ENCODE measurements at regions of chr6 and their contacts with region 1.

Region 1: GRCh38 chr6:29847871-29848630 is 20.4 kb downstream of the HLA-G start:
- DNase-seq: peak; percentile 83 to 93
- ATAC-seq: peak; percentile 82 to 95 (median 89)
- H3K4me3 ChIP-seq: no peak overlapping the region
- H3K4me3 Mint-ChIP-seq: no peak overlapping the region
- H3K27ac ChIP-seq: no peak overlapping the region
- H3K27ac Mint-ChIP-seq: no peak overlapping the region
- H3K4me1 ChIP-seq: peaks cover 10% of the 10 kb centered on the region
- H3K4me1 Mint-ChIP-seq: peaks cover 12 to 16% of the 10 kb centered on the region in 2 donors
- H3K27me3 ChIP-seq: peaks cover 29% of the 10 kb centered on the region
- H3K27me3 Mint-ChIP-seq: peaks cover 53 to 75% of the 10 kb centered on the region in 2 donors
- CTCF ChIP-seq: peak; percentile 97

Region 2: GRCh38 chr6:29752451-29753308 is 95.4 kb before region 1 on chr6:
- intact Hi-C with region 1: no loop called
- DNase-seq: peak; percentile 85 to 94
- ATAC-seq: peak; percentile 69 to 87 (median 75)
- H3K4me3 ChIP-seq: peak overlapping the region; percentile 89
- H3K4me3 Mint-ChIP-seq: peak overlapping the region; percentile 97
- H3K27ac ChIP-seq: peak overlapping the region; percentile 92
- H3K27ac Mint-ChIP-seq: peak overlapping the region; percentile 76 to 96
- H3K4me1 ChIP-seq: peaks cover 28% of the 10 kb centered on the region
- H3K4me1 Mint-ChIP-seq: peaks cover 43 to 65% of the 10 kb centered on the region in 2 donors
- H3K27me3 ChIP-seq: no peaks in the 10 kb centered on the region
- H3K27me3 Mint-ChIP-seq: no peaks in the 10 kb centered on the region
- CTCF ChIP-seq: peak; percentile 98

Region 3: GRCh38 chr6:29861521-29862255 is 13.6 kb after region 1 on chr6:
- intact Hi-C with region 1: no loop called
- DNase-seq: no peak
- ATAC-seq: no peak
- H3K4me3 ChIP-seq: no peak overlapping the region
- H3K4me3 Mint-ChIP-seq: no peak overlapping the region
- H3K27ac ChIP-seq: no peak overlapping the region
- H3K27ac Mint-ChIP-seq: no peak overlapping the region
- H3K4me1 ChIP-seq: no peaks in the 10 kb centered on the region
- H3K4me1 Mint-ChIP-seq: no peaks in the 10 kb centered on the region
- H3K27me3 ChIP-seq: peaks cover 8% of the 10 kb centered on the region
- H3K27me3 Mint-ChIP-seq: peaks cover 49 to 74% of the 10 kb centered on the region in 2 donors
- CTCF ChIP-seq: no peak

Region 4: DNA sequence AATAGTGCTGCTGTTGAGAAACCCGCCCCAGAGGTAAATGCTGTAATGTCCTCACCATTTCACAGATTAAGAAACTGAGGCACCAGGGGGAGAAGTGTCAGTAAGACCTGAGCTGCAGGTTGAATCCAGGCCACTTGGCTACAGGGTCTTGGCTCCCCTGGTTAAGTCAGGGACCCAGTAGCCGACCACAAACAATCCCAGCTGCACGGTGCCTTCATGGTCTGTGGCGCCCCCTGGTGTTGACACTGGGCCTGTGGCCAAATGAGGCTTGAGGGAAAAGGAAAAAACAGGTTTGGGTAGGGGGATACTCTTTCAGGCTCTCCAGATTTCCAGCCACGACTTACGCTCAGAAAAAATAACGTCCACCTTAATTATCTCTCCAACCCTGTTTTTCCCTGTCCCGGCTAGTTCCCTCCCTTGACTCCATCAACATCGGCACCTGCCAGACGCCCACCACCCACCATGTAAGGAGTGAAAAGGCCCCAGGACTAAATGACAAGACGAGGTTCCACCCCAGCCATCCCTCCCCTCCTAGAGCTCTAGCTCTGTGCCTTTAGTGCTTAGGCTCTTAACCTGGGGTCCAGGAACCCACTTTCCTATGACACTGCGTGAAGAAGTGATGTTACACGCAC is 165.4 kb after region 1 on chr6:
- intact Hi-C with region 1: loop called (anchors 1 kb)
- DNase-seq: peak in 1 of 2 donors; percentile 59
- ATAC-seq: peak; percentile 64 to 67 (median 66)
- H3K4me3 ChIP-seq: no peak overlapping the region
- H3K4me3 Mint-ChIP-seq: no peak overlapping the region
- H3K27ac ChIP-seq: no peak overlapping the region
- H3K27ac Mint-ChIP-seq: no peak overlapping the region
- H3K4me1 ChIP-seq: no peaks in the 10 kb centered on the region
- H3K4me1 Mint-ChIP-seq: peaks cover 0 to 6% of the 10 kb centered on the region in 2 donors
- H3K27me3 ChIP-seq: peaks cover 1% of the 10 kb centered on the region
- H3K27me3 Mint-ChIP-seq: no peaks in the 10 kb centered on the region
- CTCF ChIP-seq: peak; percentile 75

Region 5: DNA sequence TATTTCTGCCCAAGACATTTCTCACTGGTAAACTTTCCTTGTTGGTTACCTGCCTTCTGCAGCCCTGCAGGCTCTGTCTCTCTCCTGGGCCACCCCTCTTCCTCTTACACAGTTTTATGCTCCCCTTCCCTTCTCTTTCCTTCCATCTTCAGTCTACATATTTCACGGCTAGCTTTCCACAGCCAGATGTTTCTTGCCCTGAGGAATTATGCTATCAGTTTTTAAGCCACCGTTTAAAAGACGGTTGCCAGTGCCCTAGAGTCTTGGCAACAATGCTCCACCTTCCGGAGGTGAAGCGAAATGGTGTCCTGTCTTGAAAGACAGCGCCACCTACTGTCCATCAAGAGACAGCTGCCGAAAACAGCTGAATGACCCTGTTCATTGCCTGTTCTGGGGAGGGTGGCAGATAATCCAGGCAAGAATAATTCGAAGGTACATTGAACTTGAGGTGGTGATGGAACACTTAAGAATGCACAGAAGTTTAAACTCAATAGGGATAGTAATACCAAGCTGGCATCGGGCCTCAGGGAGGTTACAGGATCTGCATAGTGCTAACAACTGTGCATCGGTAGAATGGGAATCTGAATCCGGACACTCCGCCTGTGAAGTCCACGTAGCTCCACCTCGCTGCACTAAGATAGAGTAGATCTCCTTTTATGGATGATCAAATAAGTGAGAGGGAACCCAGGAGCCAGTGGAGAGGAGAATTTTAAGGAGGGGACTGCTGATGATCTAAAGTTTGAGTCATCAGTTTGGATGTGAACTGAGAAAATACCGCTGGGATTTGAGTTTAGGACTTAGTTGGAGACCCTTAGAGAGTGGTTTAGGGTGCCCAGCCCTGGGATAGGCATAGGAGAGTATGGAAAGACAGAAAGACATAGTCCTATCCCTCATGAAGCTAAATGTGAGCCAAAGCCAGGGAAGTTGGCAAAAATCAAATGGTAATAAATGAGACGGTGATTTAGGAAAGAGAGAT is 283.1 kb after region 1 on chr6:
- intact Hi-C with region 1: loop called (anchors 2 kb)
- DNase-seq: peak; percentile 36 to 94
- ATAC-seq: peak; percentile 95 to 99 (median 98)
- H3K4me3 ChIP-seq: no peak overlapping the region
- H3K4me3 Mint-ChIP-seq: no peak overlapping the region
- H3K27ac ChIP-seq: no peak overlapping the region
- H3K27ac Mint-ChIP-seq: no peak overlapping the region
- H3K4me1 ChIP-seq: peaks cover 4% of the 10 kb centered on the region
- H3K4me1 Mint-ChIP-seq: peaks cover 5 to 7% of the 10 kb centered on the region in 2 donors
- H3K27me3 ChIP-seq: peaks cover 26% of the 10 kb centered on the region
- H3K27me3 Mint-ChIP-seq: peaks cover 48 to 68% of the 10 kb centered on the region in 2 donors
- CTCF ChIP-seq: peak; percentile 100

Region 6: GRCh38 chr6:30283761-30284160 is 435.7 kb after region 1 on chr6:
- intact Hi-C with region 1: no loop called
- DNase-seq: no peak
- ATAC-seq: no peak
- H3K4me3 ChIP-seq: no peak overlapping the region
- H3K4me3 Mint-ChIP-seq: no peak overlapping the region
- H3K27ac ChIP-seq: no peak overlapping the region
- H3K27ac Mint-ChIP-seq: no peak overlapping the region
- H3K4me1 ChIP-seq: no peaks in the 10 kb centered on the region
- H3K4me1 Mint-ChIP-seq: peaks cover 0 to under 1% of the 10 kb centered on the region in 2 donors
- H3K27me3 ChIP-seq: no peaks in the 10 kb centered on the region
- H3K27me3 Mint-ChIP-seq: no peaks in the 10 kb centered on the region
- CTCF ChIP-seq: no peak

Region 7: DNA sequence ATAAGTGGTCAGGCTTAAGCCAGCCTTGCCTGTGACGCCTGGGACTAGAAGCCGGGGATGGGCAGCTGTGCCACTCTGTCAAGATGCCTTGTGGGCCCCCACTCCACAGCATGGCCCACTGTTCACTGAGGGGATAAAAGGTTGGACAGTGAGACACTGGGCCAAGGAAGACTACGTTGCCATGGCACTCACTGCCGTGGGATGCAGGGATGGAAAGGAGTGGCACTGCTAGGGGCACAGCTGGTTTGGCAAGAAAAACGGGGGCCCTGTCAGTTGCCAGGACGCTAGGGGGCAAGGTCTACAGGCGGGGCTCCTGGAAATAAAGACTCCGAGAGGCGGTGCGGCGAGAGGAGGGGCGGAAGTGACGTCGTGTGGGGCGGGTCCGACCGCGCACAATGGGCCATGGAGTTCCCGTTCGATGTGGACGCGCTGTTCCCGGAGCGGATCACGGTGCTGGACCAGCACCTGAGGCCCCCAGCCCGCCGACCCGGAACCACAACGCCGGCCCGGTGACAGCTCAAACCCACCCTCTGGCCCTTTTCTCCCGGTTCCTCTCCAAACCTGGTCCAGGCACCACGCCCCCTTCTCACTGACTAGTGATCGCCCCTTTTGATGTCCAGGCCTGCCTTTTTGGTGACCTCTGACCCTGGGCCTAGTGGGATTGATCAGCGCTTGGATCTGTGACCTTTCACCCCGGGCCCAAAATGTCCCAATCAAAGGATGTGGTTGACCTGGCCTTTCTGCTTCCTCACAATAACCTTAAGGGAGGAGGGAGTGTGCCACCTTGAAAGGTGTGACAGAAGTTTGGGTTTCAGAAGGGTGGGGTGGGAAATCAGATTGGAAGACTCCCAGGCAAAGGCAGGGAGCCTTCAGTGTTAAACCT is 778.7 kb after region 1 on chr6 and contains the start of gene ATAT1:
- intact Hi-C with region 1: no loop called
- DNase-seq: peak; percentile 87 to 95
- ATAC-seq: peak; percentile 98 to 99 (median 99)
- H3K4me3 ChIP-seq: peak within 1 kb of the TSS; percentile 63
- H3K4me3 Mint-ChIP-seq: peak within 1 kb of the TSS; percentile 90
- H3K27ac ChIP-seq: peak within 1 kb of the TSS; percentile 87
- H3K27ac Mint-ChIP-seq: peak within 1 kb of the TSS; percentile 94 to 96
- H3K4me1 ChIP-seq: peaks cover 15% of the 10 kb centered on the region
- H3K4me1 Mint-ChIP-seq: peaks cover 23 to 27% of the 10 kb centered on the region in 2 donors
- H3K27me3 ChIP-seq: no peaks in the 10 kb centered on the region
- H3K27me3 Mint-ChIP-seq: no peaks in the 10 kb centered on the region
- CTCF ChIP-seq: peak; percentile 55
- total RNA-seq, gene ATAT1: 8.1 to 10.8 (median 8.9) TPM